Naive thymus-derived CD4-positive, alpha-beta T cell (primary cell): ENCODE measurements at regions of chr13 and their contacts with region 1.

Region 1: DNA sequence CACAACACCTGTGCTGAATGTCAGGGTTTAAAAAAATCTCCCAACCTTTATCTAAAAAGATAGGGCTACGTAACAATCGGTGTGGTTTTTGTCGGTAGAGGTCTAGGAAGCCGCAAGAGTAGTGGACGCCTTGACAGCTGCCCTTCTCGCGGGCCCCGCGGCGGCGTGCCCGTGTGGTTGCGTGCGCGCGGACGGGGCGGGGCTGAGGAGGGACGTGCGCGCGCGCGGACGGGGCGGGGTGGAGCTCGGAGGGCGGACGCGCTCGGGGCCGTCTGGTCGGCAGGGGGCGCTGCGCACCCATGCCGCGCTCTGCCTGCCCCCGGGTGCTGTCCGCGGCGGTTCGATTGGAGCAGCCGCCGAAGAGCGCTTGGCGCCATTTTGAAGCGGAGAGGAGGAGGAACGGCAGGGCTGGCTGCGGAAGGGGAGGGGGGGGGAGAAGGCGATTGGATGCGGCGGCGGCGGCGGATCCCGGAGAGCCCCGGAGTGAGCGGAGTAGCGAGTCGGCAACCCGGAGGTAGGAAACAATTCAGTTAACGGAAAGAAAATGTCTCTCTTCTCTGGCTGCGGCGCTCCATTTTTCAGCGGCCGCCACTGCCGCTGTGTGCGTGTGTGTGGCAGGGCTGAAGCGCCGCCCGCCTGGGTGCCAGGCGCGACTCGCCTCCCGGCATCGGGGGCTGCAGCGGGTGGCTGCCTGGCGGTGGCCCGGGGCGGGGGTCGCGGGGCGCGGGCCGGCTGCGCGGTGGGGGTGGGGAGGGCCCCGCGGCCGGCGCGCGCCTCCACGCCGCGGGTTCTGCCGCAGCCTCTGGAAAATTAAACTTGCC is at the start of gene PDS5B:
- DNase-seq: peak; percentile 95 to 99 (median 97)
- ATAC-seq: peak; percentile 97
- H3K4me3 ChIP-seq: peak within 1 kb of the TSS; percentile 89
- H3K4me3 Mint-ChIP-seq: peak within 1 kb of the TSS; percentile 90 to 99 (median 97)
- H3K27ac ChIP-seq: peak within 1 kb of the TSS; percentile 79
- H3K27ac Mint-ChIP-seq: peak within 1 kb of the TSS; percentile 95 to 98 (median 96)
- H3K4me1 ChIP-seq: peaks cover 13 to 15% of the 10 kb centered on the region in 2 donors
- H3K4me1 Mint-ChIP-seq: peaks cover 32 to 49% (median 43%) of the 10 kb centered on the region in 7 donors
- H3K27me3 ChIP-seq: no peaks in the 10 kb centered on the region
- H3K27me3 Mint-ChIP-seq: peaks cover 0 to 20% (median 0%) of the 10 kb centered on the region in 5 donors
- total RNA-seq, gene PDS5B: 43.3 to 68.0 (median 52.1) TPM

Region 2: GRCh38 chr13:32098272-32098671 is 488.0 kb before region 1 on chr13:
- CTCF ChIA-PET with region 1: no interaction called
- POLR2A ChIA-PET with region 1: no interaction called
- intact Hi-C with region 1: no loop called
- DNase-seq: no peak
- ATAC-seq: no peak
- H3K4me3 ChIP-seq: no peak overlapping the region
- H3K4me3 Mint-ChIP-seq: no peak overlapping the region
- H3K27ac ChIP-seq: no peak overlapping the region
- H3K27ac Mint-ChIP-seq: no peak overlapping the region
- H3K4me1 ChIP-seq: no peaks in the 10 kb centered on the region
- H3K4me1 Mint-ChIP-seq: peaks cover 0 to 7% (median 0%) of the 10 kb centered on the region in 7 donors
- H3K27me3 ChIP-seq: no peaks in the 10 kb centered on the region
- H3K27me3 Mint-ChIP-seq: peaks cover 0 to 8% (median 0%) of the 10 kb centered on the region in 5 donors

Region 3: DNA sequence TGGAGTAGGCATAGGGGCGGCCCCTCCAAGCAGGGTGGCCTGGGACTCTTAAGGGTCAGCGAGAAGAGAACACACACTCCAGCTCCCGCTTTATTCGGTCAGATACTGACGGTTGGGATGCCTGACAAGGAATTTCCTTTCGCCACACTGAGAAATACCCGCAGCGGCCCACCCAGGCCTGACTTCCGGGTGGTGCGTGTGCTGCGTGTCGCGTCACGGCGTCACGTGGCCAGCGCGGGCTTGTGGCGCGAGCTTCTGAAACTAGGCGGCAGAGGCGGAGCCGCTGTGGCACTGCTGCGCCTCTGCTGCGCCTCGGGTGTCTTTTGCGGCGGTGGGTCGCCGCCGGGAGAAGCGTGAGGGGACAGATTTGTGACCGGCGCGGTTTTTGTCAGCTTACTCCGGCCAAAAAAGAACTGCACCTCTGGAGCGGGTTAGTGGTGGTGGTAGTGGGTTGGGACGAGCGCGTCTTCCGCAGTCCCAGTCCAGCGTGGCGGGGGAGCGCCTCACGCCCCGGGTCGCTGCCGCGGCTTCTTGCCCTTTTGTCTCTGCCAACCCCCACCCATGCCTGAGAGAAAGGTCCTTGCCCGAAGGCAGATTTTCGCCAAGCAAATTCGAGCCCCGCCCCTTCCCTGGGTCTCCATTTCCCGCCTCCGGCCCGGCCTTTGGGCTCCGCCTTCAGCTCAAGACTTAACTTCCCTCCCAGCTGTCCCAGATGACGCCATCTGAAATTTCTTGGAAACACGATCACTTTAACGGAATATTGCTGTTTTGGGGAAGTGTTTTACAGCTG is 270.9 kb before region 1 on chr13 and contains the starts of genes BRCA2 and ZAR1L:
- CTCF ChIA-PET with region 1: no interaction called
- POLR2A ChIA-PET with region 1: interaction called, 6 read pairs
- intact Hi-C with region 1: loop called (anchors 1 kb)
- DNase-seq: peak; percentile 79 to 90 (median 86)
- ATAC-seq: peak; percentile 94
- H3K4me3 ChIP-seq: peak within 1 kb of the TSS; percentile 94
- H3K4me3 Mint-ChIP-seq: peak within 1 kb of the TSS; percentile 92 to 98 (median 96)
- H3K27ac ChIP-seq: peak within 1 kb of the TSS; percentile 99
- H3K27ac Mint-ChIP-seq: peak within 1 kb of the TSS; percentile 98 to 100 (median 100)
- H3K4me1 ChIP-seq: peaks cover 7 to 8% of the 10 kb centered on the region in 2 donors
- H3K4me1 Mint-ChIP-seq: peaks cover 5 to 43% (median 9%) of the 10 kb centered on the region in 7 donors
- H3K27me3 ChIP-seq: no peaks in the 10 kb centered on the region
- H3K27me3 Mint-ChIP-seq: no peaks in the 10 kb centered on the region
- total RNA-seq, gene BRCA2: 3.2 to 19.9 (median 4.3) TPM
- total RNA-seq, gene ZAR1L: not detected

Region 4: DNA sequence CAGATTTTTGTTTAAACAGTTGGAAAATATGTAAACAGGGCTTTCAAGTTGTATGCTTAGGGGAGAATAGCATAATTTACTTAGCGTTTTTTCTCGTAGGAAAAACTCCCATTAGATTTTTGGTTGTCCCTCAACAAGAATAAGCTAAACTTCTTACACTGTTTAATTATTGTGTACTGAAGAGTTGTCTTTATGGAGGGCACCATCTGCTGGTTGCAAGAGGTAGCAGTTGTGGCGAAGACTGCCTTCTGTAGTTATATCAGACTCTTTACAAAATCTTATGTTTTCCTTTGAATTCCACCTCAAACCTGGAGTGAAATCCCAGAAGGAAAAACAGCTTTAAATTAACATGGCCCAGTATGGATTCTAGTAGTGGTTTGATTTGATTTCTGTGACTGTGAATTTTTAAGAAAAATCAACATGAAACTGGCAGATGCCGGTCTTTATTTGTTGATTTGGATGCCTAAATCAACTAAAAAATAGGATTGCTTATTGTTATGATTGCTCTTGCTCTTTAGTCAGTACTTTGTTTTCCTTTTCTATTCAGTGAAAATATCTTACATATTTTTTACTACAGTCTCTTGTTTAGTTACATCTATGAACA is 53.3 kb after region 1 on chr13:
- CTCF ChIA-PET with region 1: interaction called, 11 read pairs
- POLR2A ChIA-PET with region 1: interaction called, 6 read pairs
- intact Hi-C with region 1: loop called (anchors 1 kb)
- DNase-seq: peak in 7 of 9 donors; percentile 40 to 60 (median 53)
- ATAC-seq: peak; percentile 95
- H3K4me3 ChIP-seq: no peak overlapping the region
- H3K4me3 Mint-ChIP-seq: no peak overlapping the region
- H3K27ac ChIP-seq: no peak overlapping the region
- H3K27ac Mint-ChIP-seq: no peak overlapping the region
- H3K4me1 ChIP-seq: peaks cover 0 to 12% of the 10 kb centered on the region in 2 donors
- H3K4me1 Mint-ChIP-seq: peaks cover 11 to 43% (median 32%) of the 10 kb centered on the region in 7 donors
- H3K27me3 ChIP-seq: no peaks in the 10 kb centered on the region
- H3K27me3 Mint-ChIP-seq: no peaks in the 10 kb centered on the region

Region 5: GRCh38 chr13:32737111-32737571 is 150.9 kb after region 1 on chr13:
- CTCF ChIA-PET with region 1: no interaction called
- POLR2A ChIA-PET with region 1: interaction called, 3 read pairs
- intact Hi-C with region 1: loop called (anchors 1 to 2 kb)
- DNase-seq: peak in 7 of 9 donors; percentile 38 to 66 (median 59)
- ATAC-seq: peak; percentile 88
- H3K4me3 ChIP-seq: peak overlapping the region; percentile 28
- H3K4me3 Mint-ChIP-seq: peak overlapping the region; percentile 58 to 93 (median 86)
- H3K27ac ChIP-seq: peak overlapping the region; percentile 77
- H3K27ac Mint-ChIP-seq: peak overlapping the region; percentile 87 to 98 (median 94)
- H3K4me1 ChIP-seq: peaks cover 8 to 22% of the 10 kb centered on the region in 2 donors
- H3K4me1 Mint-ChIP-seq: peaks cover 17 to 64% (median 51%) of the 10 kb centered on the region in 7 donors
- H3K27me3 ChIP-seq: no peaks in the 10 kb centered on the region
- H3K27me3 Mint-ChIP-seq: no peaks in the 10 kb centered on the region

Region 6: GRCh38 chr13:33017323-33017929 is 431.1 kb after region 1 on chr13:
- CTCF ChIA-PET with region 1: no interaction called
- POLR2A ChIA-PET with region 1: no interaction called
- intact Hi-C with region 1: loop called (anchors 1 to 2 kb)
- DNase-seq: peak in 6 of 9 donors; percentile 6 to 47 (median 18)
- ATAC-seq: peak; percentile 80
- H3K4me3 ChIP-seq: peak overlapping the region; percentile 30
- H3K4me3 Mint-ChIP-seq: peak overlapping the region; percentile 37 to 81 (median 73)
- H3K27ac ChIP-seq: no peak overlapping the region
- H3K27ac Mint-ChIP-seq: peak overlapping the region in 2 of 9 donors; percentile 49 to 66
- H3K4me1 ChIP-seq: peaks cover 3 to 7% of the 10 kb centered on the region in 2 donors
- H3K4me1 Mint-ChIP-seq: peaks cover 10 to 21% (median 15%) of the 10 kb centered on the region in 7 donors
- H3K27me3 ChIP-seq: peaks cover 4 to 7% of the 10 kb centered on the region in 2 donors
- H3K27me3 Mint-ChIP-seq: peaks cover 65 to 83% (median 71%) of the 10 kb centered on the region in 5 donors

Region 7: DNA sequence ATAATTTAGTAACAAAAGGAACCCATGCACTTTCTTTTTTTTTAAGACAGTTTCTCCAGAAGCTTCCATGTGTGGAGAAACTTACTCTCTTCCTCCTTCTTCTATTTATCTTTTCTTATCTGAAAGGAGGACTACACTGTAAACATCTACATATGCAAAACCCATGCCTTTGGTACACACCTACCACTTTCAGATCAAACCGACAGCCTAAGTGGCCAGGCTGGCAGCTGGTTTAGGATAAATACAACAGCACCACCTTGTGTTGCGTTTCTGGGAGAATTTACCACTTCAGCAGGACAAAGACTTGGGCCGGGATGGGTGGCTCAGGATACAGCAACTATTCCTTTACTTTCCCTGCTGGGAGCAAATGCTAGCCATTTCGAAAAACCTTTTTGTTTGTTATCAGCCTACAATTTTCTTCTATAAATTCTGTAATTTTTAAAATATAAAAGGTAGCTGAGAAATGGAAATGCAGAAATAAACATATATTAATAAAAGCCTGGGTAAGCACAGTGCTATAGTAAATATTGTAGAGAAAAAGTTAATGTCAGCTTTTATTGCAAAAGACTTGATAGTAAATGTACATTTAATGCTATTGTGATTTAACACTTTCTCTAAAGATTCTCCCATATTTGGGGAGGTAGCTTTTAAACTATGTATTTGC is 1137.6 kb after region 1 on chr13:
- CTCF ChIA-PET with region 1: no interaction called
- POLR2A ChIA-PET with region 1: no interaction called
- intact Hi-C with region 1: loop called in 1 of 2 experiments (anchors 1 kb)
- DNase-seq: peak in 8 of 9 donors; percentile 37 to 68 (median 58)
- ATAC-seq: peak; percentile 93
- H3K4me3 ChIP-seq: no peak overlapping the region
- H3K4me3 Mint-ChIP-seq: peak overlapping the region in 5 of 10 donors; percentile 5 to 65 (median 26)
- H3K27ac ChIP-seq: no peak overlapping the region
- H3K27ac Mint-ChIP-seq: peak overlapping the region in 4 of 9 donors; percentile 6 to 84 (median 27)
- H3K4me1 ChIP-seq: peaks cover 0 to 14% of the 10 kb centered on the region in 2 donors
- H3K4me1 Mint-ChIP-seq: peaks cover 2 to 33% (median 20%) of the 10 kb centered on the region in 7 donors
- H3K27me3 ChIP-seq: no peaks in the 10 kb centered on the region
- H3K27me3 Mint-ChIP-seq: no peaks in the 10 kb centered on the region